Activated B cell treated with CpG ODN at 0.5 μM for 24 hours (primary cell): ENCODE measurements at regions of chr11 and their contacts with region 1.

Region 1: DNA sequence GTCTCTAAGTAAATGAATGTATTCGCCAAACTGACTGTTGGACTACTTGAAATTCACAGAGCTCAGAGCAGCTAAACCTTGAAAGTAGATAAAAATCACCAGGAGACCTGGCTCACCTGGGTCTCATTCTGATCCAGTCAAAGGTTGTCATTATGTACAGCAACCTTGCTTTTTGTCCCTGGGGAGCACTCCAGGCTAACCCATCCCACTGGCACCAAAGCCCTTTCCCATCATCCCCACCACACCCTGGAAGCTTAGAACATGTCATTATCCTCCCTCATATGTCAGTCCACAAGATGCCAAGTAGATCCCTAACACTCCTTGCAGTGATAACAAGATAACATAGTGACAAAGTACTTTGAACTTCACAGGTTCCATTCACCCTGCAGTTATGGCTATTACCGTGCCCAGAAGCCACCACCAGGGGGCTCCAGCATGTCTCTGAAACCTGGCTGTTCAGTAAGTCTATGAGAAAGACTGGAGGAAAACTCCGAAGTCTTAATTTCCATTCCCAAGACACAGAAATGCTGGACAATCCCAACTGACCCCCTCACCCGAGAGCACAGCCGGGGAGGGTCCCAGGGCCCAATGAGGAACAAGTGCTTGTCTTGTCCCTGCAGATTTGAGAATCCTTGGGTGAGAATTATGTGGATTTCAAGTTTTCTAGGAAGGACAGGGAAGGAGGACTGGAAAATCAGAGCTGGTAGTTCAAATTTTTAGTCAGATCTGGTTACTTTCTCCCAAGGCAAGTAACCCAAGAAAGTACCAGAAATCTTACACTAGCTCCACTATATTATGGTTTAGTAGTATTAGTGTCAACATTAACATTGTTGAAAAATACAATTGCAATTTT is 43.0 kb upstream of the USP47 start:
- DNase-seq: peak; percentile 67
- ATAC-seq: peak; percentile 74
- H3K4me3 Mint-ChIP-seq: no peak overlapping the region
- H3K27ac Mint-ChIP-seq: no peak overlapping the region
- H3K4me1 Mint-ChIP-seq: no peaks in the 10 kb centered on the region
- H3K27me3 Mint-ChIP-seq: peaks cover 21% of the 10 kb centered on the region
- CTCF ChIP-seq: peak; percentile 40

Region 2: DNA sequence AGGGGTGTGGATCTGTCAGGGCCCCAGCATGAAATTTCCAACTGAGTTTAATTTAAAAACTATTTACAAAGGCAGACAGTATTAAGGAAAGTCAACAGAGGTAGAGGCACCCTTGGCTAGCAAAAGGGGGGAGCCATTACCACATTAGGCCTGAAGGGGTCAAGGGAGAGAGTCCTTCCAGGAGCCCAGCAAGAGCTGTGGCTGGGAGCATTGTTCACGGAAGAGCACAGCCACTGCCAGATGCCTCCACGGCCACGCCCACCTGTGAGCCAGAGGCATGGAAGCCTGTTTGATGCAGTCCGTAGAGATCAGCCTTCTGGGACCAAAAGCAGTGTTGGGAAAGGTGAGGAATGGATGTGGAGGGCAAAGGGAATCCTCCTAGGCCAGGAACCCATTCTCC is 279.6 kb before region 1 on chr11:
- CTCF ChIA-PET with region 1: no interaction called
- POLR2A ChIA-PET with region 1: no interaction called
- intact Hi-C with region 1: no loop called
- DNase-seq: no peak
- ATAC-seq: no peak
- H3K4me3 Mint-ChIP-seq: no peak overlapping the region
- H3K27ac Mint-ChIP-seq: no peak overlapping the region
- H3K4me1 Mint-ChIP-seq: no peaks in the 10 kb centered on the region
- H3K27me3 Mint-ChIP-seq: peaks cover 2% of the 10 kb centered on the region
- CTCF ChIP-seq: no peak

Region 3: DNA sequence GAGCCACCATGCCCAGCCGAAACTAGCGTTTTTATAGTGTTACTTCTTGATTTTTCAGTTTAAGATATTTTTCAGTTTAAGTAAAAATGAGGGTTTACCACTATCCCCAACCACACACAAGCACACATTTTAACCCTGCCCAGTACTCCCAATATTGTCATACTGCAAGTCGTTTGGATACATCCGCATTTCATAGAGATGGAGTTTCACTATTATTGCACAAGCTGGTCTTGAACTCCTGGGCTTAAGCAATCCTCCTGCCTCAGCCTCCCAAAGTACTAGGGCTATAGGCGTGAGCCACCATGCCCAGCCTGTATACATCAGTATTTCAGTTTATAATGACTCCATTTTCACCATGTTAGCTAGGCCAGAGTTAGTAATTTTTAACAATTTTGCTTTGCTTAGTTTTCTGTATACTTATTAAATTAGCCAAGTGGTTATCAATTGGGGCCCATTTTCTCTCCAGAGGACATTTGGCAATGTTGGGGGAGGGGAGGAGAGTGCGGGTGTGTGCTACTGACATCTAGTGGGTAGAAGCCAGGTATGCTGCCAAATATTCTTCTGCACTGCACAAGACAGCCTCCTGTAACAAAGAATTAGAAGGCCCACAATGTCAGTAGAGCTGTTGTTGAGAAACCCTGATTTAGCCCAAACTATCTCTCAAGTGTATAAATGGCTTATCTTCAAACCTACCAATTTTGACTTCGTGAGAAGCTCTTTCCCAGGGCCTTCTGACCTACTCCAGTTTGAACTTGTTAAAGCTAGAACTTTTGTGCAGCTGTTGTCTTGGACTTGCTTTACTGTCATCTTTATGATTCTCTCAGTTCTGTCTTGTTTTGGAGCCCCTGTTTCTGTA is 50.3 kb after region 1 on chr11:
- CTCF ChIA-PET with region 1: interaction called, 6 read pairs
- POLR2A ChIA-PET with region 1: no interaction called
- intact Hi-C with region 1: loop called (anchors 1 kb)
- DNase-seq: no peak
- ATAC-seq: peak; percentile 98
- H3K4me3 Mint-ChIP-seq: peak overlapping the region; percentile 13
- H3K27ac Mint-ChIP-seq: peak overlapping the region; percentile 6
- H3K4me1 Mint-ChIP-seq: peaks cover 73% of the 10 kb centered on the region
- H3K27me3 Mint-ChIP-seq: no peaks in the 10 kb centered on the region
- CTCF ChIP-seq: no peak

Region 4: GRCh38 chr11:11860103-11860979 is 61.5 kb after region 1 on chr11:
- CTCF ChIA-PET with region 1: no interaction called
- POLR2A ChIA-PET with region 1: no interaction called
- intact Hi-C with region 1: no loop called
- DNase-seq: no peak
- ATAC-seq: no peak
- H3K4me3 Mint-ChIP-seq: no peak overlapping the region
- H3K27ac Mint-ChIP-seq: no peak overlapping the region
- H3K4me1 Mint-ChIP-seq: peaks cover 57% of the 10 kb centered on the region
- H3K27me3 Mint-ChIP-seq: no peaks in the 10 kb centered on the region
- CTCF ChIP-seq: no peak

Region 5: DNA sequence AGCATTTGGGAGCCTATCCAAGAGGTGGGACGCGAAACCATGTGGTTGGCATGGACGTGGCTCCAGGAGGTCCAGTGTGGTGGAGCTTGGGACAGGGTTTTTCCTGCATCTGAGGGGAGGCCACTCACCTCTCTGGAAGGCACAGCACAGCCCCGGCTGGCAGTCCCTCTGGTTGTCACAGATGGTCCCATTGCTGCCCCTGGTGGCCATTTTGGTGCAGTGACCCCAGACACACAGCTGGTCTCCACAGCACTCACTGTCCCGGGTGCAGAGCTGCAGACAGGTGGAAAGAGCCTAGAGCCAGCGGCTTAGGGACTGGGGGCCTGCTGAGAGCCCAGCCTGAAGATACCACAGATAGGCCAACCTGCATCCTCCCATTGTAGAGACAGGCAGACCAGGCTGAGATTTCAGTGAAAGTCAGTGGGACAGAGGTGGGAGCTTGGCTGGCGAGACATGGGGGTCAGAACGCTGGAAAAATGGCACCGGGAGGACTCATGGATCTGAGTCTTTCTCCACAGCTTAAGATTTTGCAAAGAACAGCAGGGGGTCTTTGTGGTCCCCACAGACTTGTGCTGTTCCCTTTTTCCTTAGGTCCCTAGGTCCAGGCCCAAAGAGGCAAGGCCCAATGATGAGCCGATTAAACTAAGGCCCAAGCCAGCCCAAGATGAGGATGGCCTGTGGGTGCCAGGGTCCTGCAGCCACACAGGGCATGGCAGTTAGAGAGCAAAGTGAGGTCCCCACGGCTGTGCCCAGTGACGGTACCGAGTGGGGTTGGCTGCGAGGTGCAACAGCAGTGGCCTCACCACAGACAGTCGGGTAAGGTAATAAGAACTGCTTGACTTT is 168.2 kb after region 1 on chr11:
- CTCF ChIA-PET with region 1: interaction called, 10 read pairs
- POLR2A ChIA-PET with region 1: no interaction called
- intact Hi-C with region 1: loop called (anchors 2 kb)
- DNase-seq: peak; percentile 42
- ATAC-seq: peak; percentile 81
- H3K4me3 Mint-ChIP-seq: no peak overlapping the region
- H3K27ac Mint-ChIP-seq: no peak overlapping the region
- H3K4me1 Mint-ChIP-seq: no peaks in the 10 kb centered on the region
- H3K27me3 Mint-ChIP-seq: peaks cover 11% of the 10 kb centered on the region
- CTCF ChIP-seq: no peak

Region 6: GRCh38 chr11:12235947-12236743 is 437.3 kb after region 1 on chr11:
- CTCF ChIA-PET with region 1: no interaction called
- POLR2A ChIA-PET with region 1: no interaction called
- intact Hi-C with region 1: loop called (anchors 1 kb)
- DNase-seq: no peak
- ATAC-seq: no peak
- H3K4me3 Mint-ChIP-seq: no peak overlapping the region
- H3K27ac Mint-ChIP-seq: no peak overlapping the region
- H3K4me1 Mint-ChIP-seq: peaks cover 8% of the 10 kb centered on the region
- H3K27me3 Mint-ChIP-seq: peaks cover 9% of the 10 kb centered on the region
- CTCF ChIP-seq: peak; percentile 40